CD8-positive, alpha-beta memory T cell (primary cell): ENCODE measurements at regions of chr5 and their contacts with region 1.

Region 1: GRCh38 chr5:112921833-112922817 is at the start of gene REEP5:
- DNase-seq: peak; percentile 77 to 89 (median 85)
- H3K4me3 ChIP-seq: peak within 1 kb of the TSS; percentile 81
- H3K4me3 Mint-ChIP-seq: peak within 1 kb of the TSS; percentile 76 to 99 (median 95)
- H3K27ac ChIP-seq: peak within 1 kb of the TSS; percentile 88
- H3K27ac Mint-ChIP-seq: peak within 1 kb of the TSS; percentile 95 to 99 (median 98)
- H3K4me1 ChIP-seq: peaks cover 62% of the 10 kb centered on the region
- H3K4me1 Mint-ChIP-seq: peaks cover 66 to 70% (median 67%) of the 10 kb centered on the region in 3 donors
- H3K27me3 ChIP-seq: no peaks in the 10 kb centered on the region
- H3K27me3 Mint-ChIP-seq: peaks cover 0 to 1% of the 10 kb centered on the region in 2 donors
- total RNA-seq, gene REEP5: 63.5 to 74.0 TPM

Region 2: GRCh38 chr5:112860929-112861637 is 61.0 kb before region 1 on chr5 and contains the start of gene SRP19:
- CTCF ChIA-PET with region 1: interaction called, 4 read pairs
- POLR2A ChIA-PET with region 1: interaction called, 15 read pairs
- DNase-seq: peak; percentile 85 to 94 (median 89)
- H3K4me3 ChIP-seq: peak within 1 kb of the TSS; percentile 96
- H3K4me3 Mint-ChIP-seq: peak within 1 kb of the TSS; percentile 93 to 97 (median 97)
- H3K27ac ChIP-seq: peak within 1 kb of the TSS; percentile 87
- H3K27ac Mint-ChIP-seq: peak within 1 kb of the TSS; percentile 90 to 99 (median 98)
- H3K4me1 ChIP-seq: peaks cover 27% of the 10 kb centered on the region
- H3K4me1 Mint-ChIP-seq: peaks cover 33 to 47% (median 36%) of the 10 kb centered on the region in 3 donors
- H3K27me3 ChIP-seq: no peaks in the 10 kb centered on the region
- H3K27me3 Mint-ChIP-seq: peaks cover 3 to 13% of the 10 kb centered on the region in 2 donors
- total RNA-seq, gene SRP19: 68.0 to 68.3 TPM

Region 3: GRCh38 chr5:112965733-112966700 is 43.9 kb after region 1 on chr5:
- CTCF ChIA-PET with region 1: interaction called, 28 read pairs
- POLR2A ChIA-PET with region 1: interaction called, 3 read pairs
- DNase-seq: no peak
- H3K4me3 ChIP-seq: no peak overlapping the region
- H3K4me3 Mint-ChIP-seq: no peak overlapping the region
- H3K27ac ChIP-seq: no peak overlapping the region
- H3K27ac Mint-ChIP-seq: no peak overlapping the region
- H3K4me1 ChIP-seq: peaks cover 6% of the 10 kb centered on the region
- H3K4me1 Mint-ChIP-seq: peaks cover 6 to 17% (median 11%) of the 10 kb centered on the region in 3 donors
- H3K27me3 ChIP-seq: no peaks in the 10 kb centered on the region
- H3K27me3 Mint-ChIP-seq: no peaks in the 10 kb centered on the region

Region 4: DNA sequence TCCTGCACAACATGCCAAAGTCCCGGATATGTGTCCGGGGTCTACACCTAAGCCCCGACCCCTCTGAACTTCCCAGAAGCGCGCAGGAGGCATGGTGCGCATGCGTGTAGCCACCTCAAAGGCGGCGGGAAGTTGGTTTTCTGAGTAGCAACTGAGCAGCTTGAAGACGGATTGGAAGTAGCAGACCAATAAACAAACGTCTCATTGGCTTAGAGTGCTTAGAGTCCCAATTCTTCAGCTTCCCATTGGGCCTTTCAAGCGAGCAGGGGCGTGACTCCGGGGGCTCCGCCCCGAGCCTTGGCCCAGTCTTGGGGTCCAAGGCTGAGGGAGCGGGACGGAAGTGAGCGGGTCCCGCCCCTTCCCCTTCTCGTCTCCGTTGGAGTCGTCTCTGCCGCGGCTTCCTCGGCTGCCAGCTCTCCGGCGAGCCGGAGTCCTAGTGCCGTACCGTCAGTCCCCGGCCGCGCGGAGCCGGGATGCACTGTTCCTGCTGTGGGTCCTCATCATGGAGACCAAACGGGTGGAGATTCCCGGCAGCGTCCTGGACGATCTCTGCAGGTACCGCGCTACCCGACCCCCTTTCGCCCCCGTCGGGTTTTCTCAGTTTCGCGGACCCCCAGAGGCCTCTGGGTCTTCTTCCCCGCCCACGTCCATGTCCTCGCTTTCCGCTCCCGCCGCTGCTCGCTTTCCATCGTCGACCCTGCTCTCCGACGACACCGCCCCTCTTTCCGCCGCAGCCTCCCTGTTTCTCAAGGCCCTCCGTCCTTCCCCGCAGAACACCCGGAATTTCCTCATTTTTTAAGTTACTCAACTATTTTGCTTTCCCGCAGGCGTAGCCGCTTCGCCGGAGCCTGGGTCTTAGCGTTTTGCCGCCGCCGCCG is 54.5 kb after region 1 on chr5 and contains the start of gene DCP2:
- CTCF ChIA-PET with region 1: interaction called, 14 read pairs
- POLR2A ChIA-PET with region 1: interaction called, 21 read pairs
- DNase-seq: peak; percentile 91 to 97 (median 97)
- H3K4me3 ChIP-seq: peak within 1 kb of the TSS; percentile 74
- H3K4me3 Mint-ChIP-seq: peak within 1 kb of the TSS; percentile 93 to 99 (median 98)
- H3K27ac ChIP-seq: peak within 1 kb of the TSS; percentile 84
- H3K27ac Mint-ChIP-seq: peak within 1 kb of the TSS; percentile 91 to 99 (median 96)
- H3K4me1 ChIP-seq: peaks cover 48% of the 10 kb centered on the region
- H3K4me1 Mint-ChIP-seq: peaks cover 43 to 57% (median 55%) of the 10 kb centered on the region in 3 donors
- H3K27me3 ChIP-seq: no peaks in the 10 kb centered on the region
- H3K27me3 Mint-ChIP-seq: peaks cover 0 to 2% of the 10 kb centered on the region in 2 donors
- total RNA-seq, gene DCP2: 54.5 to 61.5 TPM